PC-3 (cell line): ENCODE measurements at regions of chr1 and their contacts with region 1.

Region 1: GRCh38 chr1:216221260-216221700 is 202.0 kb downstream of the USH2A start:
- DNase-seq: peak; percentile 96
- ATAC-seq: peak; percentile 89
- H3K4me3 ChIP-seq: peak overlapping the region; percentile 68
- H3K27ac ChIP-seq: no peak overlapping the region
- H3K4me1 ChIP-seq: peaks cover 13% of the 10 kb centered on the region
- H3K27me3 ChIP-seq: peaks cover 12% of the 10 kb centered on the region; the same call in 1 of the 2 replicates
- CTCF ChIP-seq: peak; percentile 99

Region 2: DNA sequence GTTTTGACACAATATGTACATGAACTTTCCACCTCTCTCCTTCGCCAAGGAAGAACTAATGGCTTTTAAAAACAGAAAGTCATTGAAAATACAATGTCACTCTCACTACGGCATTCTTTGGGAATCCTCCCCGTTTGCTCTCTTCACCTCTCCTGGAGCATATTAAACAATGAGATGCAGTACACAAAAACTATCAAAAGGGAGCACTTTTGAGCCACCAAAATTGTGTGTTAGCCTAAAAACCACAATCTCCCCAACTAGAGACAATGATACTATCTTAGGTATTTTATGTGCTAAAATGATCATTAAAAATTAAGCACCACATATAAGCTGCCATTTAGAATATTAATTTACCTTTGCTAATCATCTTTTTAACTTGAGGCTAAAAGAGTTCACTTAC is 228.7 kb before region 1 on chr1:
- CTCF ChIA-PET with region 1: interaction called, 14 read pairs
- POLR2A ChIA-PET with region 1: no interaction called
- intact Hi-C with region 1: loop called (anchors 1 kb)
- DNase-seq: peak; percentile 72
- ATAC-seq: peak; percentile 82
- H3K4me3 ChIP-seq: no peak overlapping the region
- H3K27ac ChIP-seq: no peak overlapping the region
- H3K4me1 ChIP-seq: no peaks in the 10 kb centered on the region
- H3K27me3 ChIP-seq: peaks cover 58% of the 10 kb centered on the region
- CTCF ChIP-seq: peak; percentile 83

Region 3: DNA sequence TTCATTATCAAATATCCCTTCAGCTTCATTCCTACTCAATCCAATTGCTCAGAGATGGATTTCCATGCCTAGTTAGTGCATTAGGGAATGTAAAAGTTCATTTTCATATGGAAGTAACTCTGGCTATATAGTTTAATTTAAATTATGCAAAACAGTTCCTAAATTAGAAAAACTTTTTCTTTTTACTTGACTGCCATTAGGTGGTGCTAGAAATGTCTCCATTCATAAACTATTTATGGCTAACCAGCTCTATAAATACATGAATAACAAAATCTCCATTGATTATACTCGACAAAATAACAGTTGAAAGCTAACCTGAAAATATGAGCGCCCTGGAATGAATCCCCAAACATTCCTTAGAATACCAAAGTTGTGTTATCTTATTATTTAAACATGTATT is 109.4 kb before region 1 on chr1:
- CTCF ChIA-PET with region 1: interaction called, 15 read pairs
- POLR2A ChIA-PET with region 1: no interaction called
- intact Hi-C with region 1: loop called (anchors 1 kb)
- DNase-seq: peak; percentile 29
- ATAC-seq: peak; percentile 46; the same call in 1 of the 2 replicates
- H3K4me3 ChIP-seq: no peak overlapping the region
- H3K27ac ChIP-seq: no peak overlapping the region
- H3K4me1 ChIP-seq: no peaks in the 10 kb centered on the region
- H3K27me3 ChIP-seq: peaks cover 38% of the 10 kb centered on the region
- CTCF ChIP-seq: peak; percentile 80

Region 4: DNA sequence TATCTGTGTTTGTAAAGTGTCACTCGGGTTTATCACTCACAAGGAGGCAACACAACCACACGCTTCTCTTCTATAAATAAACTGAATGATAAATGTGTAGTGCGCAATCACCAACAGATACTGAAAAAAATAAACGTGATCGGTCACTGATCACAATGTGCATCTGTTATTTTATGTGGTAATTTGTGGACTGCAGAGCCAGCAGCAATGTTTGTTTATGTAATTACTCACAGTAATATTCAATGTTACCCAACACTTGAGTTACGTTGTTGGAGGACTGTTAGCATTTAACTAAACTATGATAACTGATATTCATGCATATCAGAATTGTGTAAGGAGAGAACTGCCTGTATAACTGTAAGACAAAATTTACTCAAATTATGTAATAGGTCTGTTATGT is 72.4 kb after region 1 on chr1:
- CTCF ChIA-PET with region 1: no interaction called
- POLR2A ChIA-PET with region 1: no interaction called
- intact Hi-C with region 1: loop called (anchors 2 kb)
- DNase-seq: peak; percentile 63
- ATAC-seq: peak; percentile 97
- H3K4me3 ChIP-seq: no peak overlapping the region
- H3K27ac ChIP-seq: no peak overlapping the region
- H3K4me1 ChIP-seq: no peaks in the 10 kb centered on the region
- H3K27me3 ChIP-seq: no peaks in the 10 kb centered on the region
- CTCF ChIP-seq: no peak

Region 5: GRCh38 chr1:216464489-216464888 is 243.2 kb after region 1 on chr1:
- CTCF ChIA-PET with region 1: interaction called, 14 read pairs
- POLR2A ChIA-PET with region 1: no interaction called
- intact Hi-C with region 1: loop called (anchors 5 kb)
- DNase-seq: peak; percentile 99
- ATAC-seq: peak; percentile 97
- H3K4me3 ChIP-seq: no peak overlapping the region
- H3K27ac ChIP-seq: no peak overlapping the region
- H3K4me1 ChIP-seq: peaks cover 43% of the 10 kb centered on the region
- H3K27me3 ChIP-seq: no peaks in the 10 kb centered on the region
- CTCF ChIP-seq: no peak

Region 6: DNA sequence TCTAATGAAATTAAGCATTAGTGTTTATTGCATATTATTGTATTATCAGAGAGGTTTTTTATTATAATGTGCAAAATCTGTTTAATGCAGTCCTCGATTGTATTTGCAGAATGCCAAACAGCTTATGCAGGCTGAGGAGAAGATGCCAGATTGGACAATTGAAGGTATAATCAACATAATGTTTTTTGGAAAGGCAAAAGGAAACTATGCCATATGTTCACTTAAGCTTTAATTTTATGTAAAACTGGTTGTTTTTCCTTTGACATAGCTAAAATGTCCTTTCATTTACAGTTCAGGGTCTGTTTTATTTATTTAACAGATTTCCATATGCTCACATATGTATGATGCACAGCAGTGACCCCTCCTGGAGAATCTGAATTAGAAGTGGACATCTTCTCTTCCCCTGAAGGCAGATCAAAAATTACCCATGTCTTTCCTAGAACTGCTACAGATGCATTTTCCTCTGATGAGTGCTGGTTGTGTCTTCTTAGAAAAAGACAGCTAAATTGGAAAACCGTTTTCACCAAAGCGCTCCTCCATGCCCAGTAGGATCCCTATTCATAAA is 345.4 kb after region 1 on chr1:
- CTCF ChIA-PET with region 1: interaction called, 16 read pairs
- POLR2A ChIA-PET with region 1: no interaction called
- intact Hi-C with region 1: loop called (anchors 1 kb)
- DNase-seq: peak; percentile 82
- ATAC-seq: peak; percentile 85
- H3K4me3 ChIP-seq: no peak overlapping the region
- H3K27ac ChIP-seq: no peak overlapping the region
- H3K4me1 ChIP-seq: no peaks in the 10 kb centered on the region
- H3K27me3 ChIP-seq: peaks cover 27% of the 10 kb centered on the region
- CTCF ChIP-seq: peak; percentile 95